ENCODE measurements at regions of chrX and their contacts with region 1.

Region 1: DNA sequence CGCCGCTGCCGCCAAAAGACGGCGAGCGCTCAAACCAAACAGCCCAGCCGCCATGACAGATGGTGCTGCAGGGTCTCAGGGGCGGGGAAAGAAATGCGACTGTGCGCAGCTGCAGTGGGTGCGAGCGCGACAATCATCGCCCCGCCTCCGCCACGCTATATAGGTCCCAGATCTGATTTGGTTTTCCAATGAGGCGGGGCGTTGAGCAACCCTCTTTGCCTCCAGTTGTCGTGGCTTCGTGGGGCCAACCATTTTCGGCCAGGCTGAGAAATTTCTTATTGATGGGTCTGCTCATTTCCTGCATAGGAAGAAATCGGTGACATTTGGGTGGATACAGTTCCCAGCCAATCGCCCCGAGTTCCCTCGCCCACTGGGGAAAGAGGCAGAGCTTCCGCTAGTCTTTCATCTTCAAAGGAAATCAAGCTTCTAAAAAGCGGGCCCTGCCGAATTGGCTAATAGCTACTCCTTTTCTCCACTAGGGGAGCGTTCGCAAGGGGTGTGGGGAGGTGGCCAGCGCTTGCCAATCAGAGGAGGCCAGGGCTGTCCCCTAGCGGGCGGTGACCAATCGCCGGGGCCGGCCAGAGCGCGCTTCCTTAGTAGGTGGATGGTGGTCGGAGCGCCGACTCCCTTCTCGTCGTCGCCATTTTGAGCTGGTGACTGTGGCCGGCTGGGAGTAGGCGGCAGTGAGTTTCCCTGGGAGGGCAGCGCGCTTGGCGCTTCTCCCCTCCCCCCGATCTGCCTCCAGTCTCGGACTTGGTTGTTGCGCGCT is at the starts of genes NDUFB11 and RBM10:
- DNase-seq: peak; percentile 81 to 96 (median 93)
- H3K4me3 ChIP-seq: peak within 1 kb of the TSS; percentile 37 to 83 (median 68)
- H3K27ac ChIP-seq: peak within 1 kb of the TSS; percentile 67 to 98 (median 94)
- H3K27me3 ChIP-seq: peaks cover 0 to 49% (median 6%) of the 10 kb centered on the region in 45 donors
- CTCF ChIP-seq: peak; percentile 29 to 79 (median 61)
- total RNA-seq, gene NDUFB11: 40.8 to 88.5 (median 65.6) TPM
- total RNA-seq, gene RBM10: 25.1 to 47.6 (median 36.8) TPM

Region 2: GRCh38 chrX:46941341-46941740 is 203.5 kb before region 1 on chrX:
- intact Hi-C with region 1: no loop called
- DNase-seq: no peak
- H3K4me3 ChIP-seq: no peak overlapping the region
- H3K27ac ChIP-seq: no peak overlapping the region
- H3K27me3 ChIP-seq: peaks cover 0 to 50% (median 8%) of the 10 kb centered on the region in 45 donors
- CTCF ChIP-seq: no peak

Region 3: GRCh38 chrX:47093248-47093647 is 51.6 kb before region 1 on chrX:
- intact Hi-C with region 1: loop called in 1 of 2 experiments (anchors 10 kb)
- DNase-seq: no peak
- H3K4me3 ChIP-seq: no peak overlapping the region
- H3K27ac ChIP-seq: peak overlapping the region in 5 of 59 donors; percentile 27 to 81 (median 79)
- H3K27me3 ChIP-seq: peaks cover 0 to 41% (median 4%) of the 10 kb centered on the region in 45 donors
- CTCF ChIP-seq: peak in 55 of 56 donors; percentile 35 to 76 (median 57)

Region 4: GRCh38 chrX:47129157-47129898 is 15.5 kb before region 1 on chrX:
- intact Hi-C with region 1: loop called in 1 of 2 experiments (anchors 2 kb)
- DNase-seq: peak; percentile 69 to 96 (median 88)
- H3K4me3 ChIP-seq: peak overlapping the region; percentile 26 to 74 (median 62)
- H3K27ac ChIP-seq: peak overlapping the region in 58 of 59 donors; percentile 14 to 92 (median 85)
- H3K27me3 ChIP-seq: peaks cover 0 to 63% (median 8%) of the 10 kb centered on the region in 45 donors
- CTCF ChIP-seq: peak in 1 of 56 donors; percentile 11

Region 5: DNA sequence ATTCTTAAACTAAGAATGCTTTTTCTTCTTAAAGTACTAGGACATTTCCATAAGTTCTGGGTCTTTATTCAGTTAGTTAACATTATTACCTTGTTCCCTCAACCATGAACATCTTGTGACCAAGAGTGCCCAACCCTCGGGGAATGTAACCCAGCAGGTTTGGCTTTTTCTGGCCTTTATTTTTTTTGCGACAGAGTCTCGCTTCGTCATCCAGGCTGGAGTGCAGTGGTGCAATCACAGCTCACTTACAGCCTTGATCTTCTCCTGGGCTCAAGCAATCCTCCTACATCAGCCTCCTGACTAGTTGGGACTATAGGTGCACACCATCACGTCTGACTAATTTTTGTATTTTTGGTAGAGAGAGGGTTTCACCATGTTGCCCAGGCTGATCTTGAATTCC is 153.1 kb after region 1 on chrX:
- intact Hi-C with region 1: no loop called
- DNase-seq: no peak
- H3K4me3 ChIP-seq: no peak overlapping the region
- H3K27ac ChIP-seq: no peak overlapping the region
- H3K27me3 ChIP-seq: peaks cover 0 to 79% (median 15%) of the 10 kb centered on the region in 45 donors
- CTCF ChIP-seq: no peak

Measured in dorsolateral prefrontal cortex (tissue), 120 donors.